GM12878 (cell line): ENCODE measurements at regions of chr5 and their contacts with region 1.

Region 1: GRCh38 chr5:171913987-171914273 is 92.5 kb downstream of the FBXW11 start:
- DNase-seq: no peak
- ATAC-seq: no peak; the same call in 2 of the 3 replicates
- H3K4me3 ChIP-seq: no peak overlapping the region
- H3K27ac ChIP-seq: peak overlapping the region; percentile 49
- H3K4me1 ChIP-seq: peaks cover 25% of the 10 kb centered on the region
- H3K27me3 ChIP-seq: no peaks in the 10 kb centered on the region
- CTCF ChIP-seq: no peak
- EP300 ChIP-seq: no peak
- POLR2A ChIP-seq: no peak
- RAD21 ChIP-seq: no peak

Region 2: GRCh38 chr5:171927345-171927941 is 13.5 kb after region 1 on chr5:
- CTCF ChIA-PET with region 1: interaction called, 11 read pairs
- POLR2A ChIA-PET with region 1: interaction called, 3 read pairs
- RAD21 ChIA-PET with region 1: interaction called, 14 read pairs
- SMC1A ChIA-PET with region 1: interaction called, 32 read pairs
- in situ Hi-C with region 1: no loop called
- intact Hi-C with region 1: no loop called
- DNase-seq: no peak
- ATAC-seq: peak; percentile 38
- H3K4me3 ChIP-seq: no peak overlapping the region
- H3K27ac ChIP-seq: no peak overlapping the region
- H3K4me1 ChIP-seq: peaks cover 17% of the 10 kb centered on the region
- H3K27me3 ChIP-seq: no peaks in the 10 kb centered on the region
- CTCF ChIP-seq: peak in 1 of 3 experiments; percentile 37; a peak in 2 of 6 replicates
- EP300 ChIP-seq: no peak
- POLR2A ChIP-seq: no peak
- RAD21 ChIP-seq: peak; percentile 15; the same call in 1 of the 2 replicates

Region 3: GRCh38 chr5:171961117-171961516 is 47.2 kb after region 1 on chr5:
- CTCF ChIA-PET with region 1: interaction called, 54 read pairs
- POLR2A ChIA-PET with region 1: interaction called, 3 read pairs
- RAD21 ChIA-PET with region 1: interaction called, 18 read pairs
- SMC1A ChIA-PET with region 1: interaction called, 26 read pairs
- in situ Hi-C with region 1: no loop called
- intact Hi-C with region 1: loop called (anchors 5 kb)
- DNase-seq: peak; percentile 74
- ATAC-seq: peak; percentile 88
- H3K4me3 ChIP-seq: no peak overlapping the region
- H3K27ac ChIP-seq: peak overlapping the region; percentile 51
- H3K4me1 ChIP-seq: peaks cover 43% of the 10 kb centered on the region
- H3K27me3 ChIP-seq: no peaks in the 10 kb centered on the region
- CTCF ChIP-seq: no peak
- EP300 ChIP-seq: peak; percentile 16 to 81; a peak in 1 of 4 replicates
- POLR2A ChIP-seq: no peak
- RAD21 ChIP-seq: 0 out of 2 replicates have a peak, but pooled peaks have one; percentile 2

Region 4: GRCh38 chr5:171999877-172000276 is 85.9 kb after region 1 on chr5:
- CTCF ChIA-PET with region 1: interaction called, 179 read pairs
- POLR2A ChIA-PET with region 1: interaction called, 3 read pairs
- RAD21 ChIA-PET with region 1: interaction called, 97 read pairs
- SMC1A ChIA-PET with region 1: interaction called, 167 read pairs
- in situ Hi-C with region 1: no loop called
- intact Hi-C with region 1: loop called (anchors 1 kb)
- DNase-seq: peak; percentile 57
- ATAC-seq: peak; percentile 70
- H3K4me3 ChIP-seq: peak overlapping the region; percentile 23; the same call in 1 of the 2 replicates
- H3K27ac ChIP-seq: peak overlapping the region; percentile 22
- H3K4me1 ChIP-seq: peaks cover 45% of the 10 kb centered on the region
- H3K27me3 ChIP-seq: no peaks in the 10 kb centered on the region
- CTCF ChIP-seq: no peak
- EP300 ChIP-seq: no peak
- POLR2A ChIP-seq: no peak
- RAD21 ChIP-seq: no peak

Region 5: DNA sequence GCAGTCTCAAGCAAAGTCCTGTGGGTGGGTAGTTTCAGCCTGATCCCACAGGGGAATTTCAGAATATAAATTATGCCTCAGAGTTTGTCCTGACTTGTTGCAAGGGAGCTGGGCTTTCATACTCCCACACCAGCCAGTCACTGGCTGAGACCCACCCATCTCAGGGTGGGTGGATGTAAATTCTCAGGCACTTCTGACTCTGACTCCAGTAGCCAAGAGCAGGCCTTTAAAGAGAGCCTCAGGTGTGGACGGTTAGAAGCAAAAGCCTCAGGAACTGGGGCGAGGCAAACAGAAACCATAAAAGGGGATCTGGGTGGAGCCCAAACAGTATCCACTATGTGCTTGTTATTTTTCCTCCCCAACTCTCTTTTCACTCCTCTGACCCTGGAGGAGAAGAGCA is 121.1 kb after region 1 on chr5:
- CTCF ChIA-PET with region 1: interaction called, 123 read pairs
- POLR2A ChIA-PET with region 1: interaction called, 3 read pairs
- RAD21 ChIA-PET with region 1: interaction called, 82 read pairs
- SMC1A ChIA-PET with region 1: interaction called, 92 read pairs
- in situ Hi-C with region 1: loop called (anchors 5 kb)
- intact Hi-C with region 1: loop called (anchors 1 kb)
- DNase-seq: peak; percentile 33
- ATAC-seq: peak; percentile 89
- H3K4me3 ChIP-seq: no peak overlapping the region
- H3K27ac ChIP-seq: no peak overlapping the region; the same call in 1 of the 2 replicates
- H3K4me1 ChIP-seq: peaks cover 5% of the 10 kb centered on the region
- H3K27me3 ChIP-seq: no peaks in the 10 kb centered on the region
- CTCF ChIP-seq: no peak
- EP300 ChIP-seq: no peak
- POLR2A ChIP-seq: no peak
- RAD21 ChIP-seq: no peak

Region 6: DNA sequence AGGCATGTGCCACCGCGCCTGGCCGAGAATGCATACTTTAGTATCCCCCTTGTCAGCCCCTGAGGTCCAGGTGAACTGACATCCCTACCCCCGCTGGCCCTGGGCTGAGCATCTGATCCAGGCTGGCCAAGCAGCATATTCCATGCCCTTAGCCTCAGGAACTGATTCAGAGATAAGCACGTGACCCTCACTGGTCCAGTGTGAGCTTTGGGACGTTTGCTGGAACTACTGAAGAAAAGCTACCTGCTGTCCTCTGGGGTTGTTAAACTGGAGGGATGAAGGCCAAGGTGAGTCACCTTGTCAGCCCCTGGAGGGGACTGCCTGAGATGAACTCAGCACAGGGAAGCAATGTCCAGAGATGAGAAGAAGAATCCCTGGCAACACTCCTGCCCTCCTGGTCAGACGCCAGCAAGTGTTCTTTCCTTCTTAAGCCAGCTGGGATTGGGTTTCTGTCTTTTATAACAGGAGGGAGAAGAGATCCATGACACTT is 151.6 kb after region 1 on chr5:
- CTCF ChIA-PET with region 1: interaction called, 10 read pairs
- POLR2A ChIA-PET with region 1: no interaction called
- RAD21 ChIA-PET with region 1: interaction called, 36 read pairs
- SMC1A ChIA-PET with region 1: interaction called, 32 read pairs
- in situ Hi-C with region 1: no loop called
- intact Hi-C with region 1: no loop called
- DNase-seq: no peak
- ATAC-seq: no peak
- H3K4me3 ChIP-seq: no peak overlapping the region
- H3K27ac ChIP-seq: no peak overlapping the region
- H3K4me1 ChIP-seq: peaks cover 12% of the 10 kb centered on the region
- H3K27me3 ChIP-seq: no peaks in the 10 kb centered on the region
- CTCF ChIP-seq: no peak
- EP300 ChIP-seq: no peak
- POLR2A ChIP-seq: no peak
- RAD21 ChIP-seq: no peak

Region 7: GRCh38 chr5:172144291-172144815 is 230.4 kb after region 1 on chr5:
- CTCF ChIA-PET with region 1: no interaction called
- POLR2A ChIA-PET with region 1: no interaction called
- RAD21 ChIA-PET with region 1: no interaction called
- SMC1A ChIA-PET with region 1: no interaction called
- in situ Hi-C with region 1: no loop called
- intact Hi-C with region 1: no loop called
- DNase-seq: no peak
- ATAC-seq: peak; percentile 85
- H3K4me3 ChIP-seq: no peak overlapping the region
- H3K27ac ChIP-seq: peak overlapping the region; percentile 24
- H3K4me1 ChIP-seq: peaks cover 11% of the 10 kb centered on the region
- H3K27me3 ChIP-seq: no peaks in the 10 kb centered on the region
- CTCF ChIP-seq: no peak
- EP300 ChIP-seq: no peak
- POLR2A ChIP-seq: no peak; the same call in 1 of the 2 replicates
- RAD21 ChIP-seq: no peak